Lower leg skin (tissue), 4 donors: ENCODE measurements at regions of chr6 and their contacts with region 1.

Region 1: GRCh38 chr6:127302728-127303660 is 36.3 kb downstream of the RNF146 start:
- DNase-seq: peak in 1 of 2 donors; percentile 59
- H3K4me3 ChIP-seq: no peak overlapping the region
- CTCF ChIP-seq: no peak
- POLR2A ChIP-seq: no peak

Region 2: GRCh38 chr6:127420556-127420955 is 117.6 kb after region 1 on chr6:
- intact Hi-C with region 1: loop called (anchors 10 kb)
- DNase-seq: peak; percentile 79 to 91
- H3K4me3 ChIP-seq: no peak overlapping the region
- CTCF ChIP-seq: no peak
- POLR2A ChIP-seq: no peak